CD8-positive, alpha-beta memory T cell (primary cell): ENCODE measurements at regions of chr1 and their contacts with region 1.

Region 1: DNA sequence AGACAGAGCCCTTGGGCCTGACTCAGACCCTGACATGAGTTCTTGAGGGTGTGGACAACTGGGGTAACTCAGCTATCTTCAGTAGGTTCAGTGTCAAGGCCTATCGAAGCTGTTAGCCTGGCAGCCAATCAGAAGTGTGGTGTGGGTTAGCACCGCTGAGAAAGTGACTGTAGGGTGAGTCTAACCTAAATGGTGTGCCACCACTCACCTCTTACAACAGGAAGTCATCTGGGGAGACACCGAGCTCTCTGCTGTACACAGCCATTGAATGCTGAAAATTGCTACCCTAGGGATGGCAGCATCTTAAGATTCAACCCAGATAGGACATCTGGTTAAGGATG is 44.6 kb downstream of the RASSF5 start:
- DNase-seq: peak; percentile 71 to 91 (median 83)
- H3K4me3 ChIP-seq: no peak overlapping the region
- H3K4me3 Mint-ChIP-seq: peak overlapping the region; percentile 4 to 79 (median 60)
- H3K27ac ChIP-seq: no peak overlapping the region
- H3K27ac Mint-ChIP-seq: peak overlapping the region; percentile 84 to 100 (median 96)
- H3K4me1 ChIP-seq: peaks cover 65% of the 10 kb centered on the region
- H3K4me1 Mint-ChIP-seq: peaks cover 57 to 64% (median 61%) of the 10 kb centered on the region in 3 donors
- H3K27me3 ChIP-seq: no peaks in the 10 kb centered on the region
- H3K27me3 Mint-ChIP-seq: peaks cover 0 to 4% of the 10 kb centered on the region in 2 donors

Region 2: DNA sequence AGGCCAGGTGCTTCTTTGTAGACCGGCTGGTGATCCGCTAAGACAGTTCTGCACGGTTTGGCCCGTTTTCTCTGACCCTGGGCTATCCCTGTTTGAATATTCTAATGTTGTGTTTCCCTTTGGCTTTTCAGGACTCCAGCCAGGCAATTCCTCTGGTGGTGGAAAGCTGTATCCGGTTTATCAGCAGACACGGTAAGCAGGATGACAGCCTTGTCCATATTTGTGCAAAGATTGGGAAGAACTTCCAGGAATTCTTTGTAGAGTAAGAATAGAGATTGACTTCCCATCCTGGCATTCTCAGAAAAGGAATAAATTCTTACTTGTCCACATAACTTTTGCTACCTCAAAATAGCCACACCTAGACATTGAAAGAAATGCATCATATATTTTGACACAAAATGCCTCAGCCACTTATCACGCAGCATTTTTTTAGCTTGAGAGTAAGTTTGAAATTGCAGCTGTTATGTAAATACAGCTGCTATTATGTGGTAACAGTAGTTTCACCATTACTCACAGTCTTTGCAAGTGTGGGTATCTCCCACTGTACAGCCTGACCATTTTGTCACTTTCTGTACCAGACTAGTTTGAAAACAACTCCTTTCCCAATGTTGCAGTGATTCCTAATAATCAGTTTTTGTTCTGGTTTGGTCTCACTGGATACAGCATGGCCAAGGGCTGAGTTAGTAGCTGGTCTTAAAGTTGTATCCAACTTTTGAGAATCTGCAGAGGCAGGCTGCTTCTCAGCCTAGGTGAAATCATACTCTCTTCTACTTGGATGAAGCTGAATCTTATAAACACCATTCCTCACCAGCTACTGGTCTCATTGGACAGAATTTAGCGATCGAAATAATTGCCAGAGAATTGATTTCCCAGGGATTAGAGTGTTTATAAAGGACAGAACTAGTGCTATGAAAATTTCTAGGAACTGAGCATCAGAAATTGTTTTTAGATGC is 121.6 kb before region 1 on chr1:
- CTCF ChIA-PET with region 1: no interaction called
- POLR2A ChIA-PET with region 1: no interaction called
- DNase-seq: no peak
- H3K4me3 ChIP-seq: no peak overlapping the region
- H3K4me3 Mint-ChIP-seq: no peak overlapping the region
- H3K27ac ChIP-seq: no peak overlapping the region
- H3K27ac Mint-ChIP-seq: no peak overlapping the region
- H3K4me1 ChIP-seq: no peaks in the 10 kb centered on the region
- H3K4me1 Mint-ChIP-seq: no peaks in the 10 kb centered on the region
- H3K27me3 ChIP-seq: no peaks in the 10 kb centered on the region
- H3K27me3 Mint-ChIP-seq: no peaks in the 10 kb centered on the region

Region 3: DNA sequence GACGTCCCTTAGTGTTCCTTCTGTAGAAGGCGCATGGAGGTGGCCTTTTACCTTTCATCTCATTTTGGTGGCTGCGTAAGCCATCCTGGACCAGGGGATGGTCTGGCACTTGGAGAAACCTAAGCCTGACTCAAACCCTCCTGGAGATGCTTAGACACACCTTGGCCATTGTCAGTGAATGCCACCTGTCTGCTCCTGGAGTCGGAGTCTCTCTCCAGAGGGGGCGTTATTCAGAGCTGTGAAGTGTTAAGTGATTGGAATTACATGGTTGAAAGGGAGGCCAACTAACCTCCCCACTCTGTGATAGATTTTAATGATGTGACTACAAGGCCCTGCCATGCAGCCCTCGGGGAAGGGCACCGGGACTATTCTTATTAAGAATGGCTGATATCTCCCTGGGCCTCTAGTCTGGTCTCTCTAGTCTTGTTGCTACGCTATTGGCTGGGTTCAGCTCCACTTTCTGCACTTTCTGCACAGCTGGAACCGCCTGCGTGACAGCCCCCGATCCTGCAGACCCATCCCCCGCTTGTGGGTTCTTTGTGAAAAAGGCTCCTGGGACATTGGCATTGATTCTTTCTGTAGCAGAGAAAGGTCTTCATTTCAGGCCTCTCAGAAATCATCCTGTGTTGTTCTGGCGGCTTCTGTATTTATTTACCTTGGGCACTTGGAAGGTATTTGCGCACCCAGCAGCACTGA is 40.4 kb before region 1 on chr1:
- CTCF ChIA-PET with region 1: no interaction called
- POLR2A ChIA-PET with region 1: no interaction called
- DNase-seq: no peak
- H3K4me3 ChIP-seq: no peak overlapping the region
- H3K4me3 Mint-ChIP-seq: peak overlapping the region in 1 of 7 donors; percentile 68
- H3K27ac ChIP-seq: no peak overlapping the region
- H3K27ac Mint-ChIP-seq: no peak overlapping the region
- H3K4me1 ChIP-seq: peaks cover 14% of the 10 kb centered on the region
- H3K4me1 Mint-ChIP-seq: peaks cover 9 to 22% (median 15%) of the 10 kb centered on the region in 3 donors
- H3K27me3 ChIP-seq: peaks cover 17% of the 10 kb centered on the region
- H3K27me3 Mint-ChIP-seq: peaks cover 12 to 22% of the 10 kb centered on the region in 2 donors

Region 4: DNA sequence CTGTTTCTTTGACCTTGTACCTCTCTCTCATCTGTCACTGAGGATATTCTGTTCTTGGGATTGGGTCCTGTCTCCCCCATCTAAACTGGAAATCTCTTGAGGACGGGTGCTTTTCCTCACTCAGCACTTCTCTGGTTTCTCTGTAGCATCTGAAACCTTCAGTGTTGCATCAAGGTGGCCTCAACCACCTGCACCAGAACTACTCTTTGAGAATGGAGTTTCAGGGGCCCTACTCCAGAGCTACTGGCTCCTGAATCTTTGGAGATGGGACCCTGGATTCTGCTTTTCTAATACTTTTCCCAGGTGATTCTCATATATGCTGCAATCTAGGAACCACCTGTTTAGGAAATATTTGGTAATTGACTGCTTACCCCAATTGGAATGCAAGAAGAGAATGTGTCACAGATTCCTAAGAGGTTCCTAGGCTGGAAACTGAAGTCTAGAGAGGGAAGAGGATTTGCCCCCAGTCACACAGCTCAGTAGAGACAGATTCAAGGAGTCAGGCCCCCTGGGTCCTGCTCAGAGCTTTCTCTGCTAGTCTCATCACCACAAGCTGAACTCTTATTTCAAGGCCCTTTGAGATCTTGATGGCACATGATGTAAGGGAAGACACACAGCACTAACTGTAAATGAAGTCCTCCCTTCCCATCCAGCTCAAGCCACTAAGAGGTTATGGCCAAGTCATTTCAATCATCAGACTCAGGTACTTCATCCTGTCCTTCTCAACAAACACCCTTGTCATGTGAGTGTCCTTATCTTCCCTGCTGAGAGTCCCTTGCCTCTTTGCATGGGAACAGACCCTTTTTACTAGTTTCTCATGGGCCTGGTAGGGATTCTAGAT is 11.6 kb after region 1 on chr1:
- CTCF ChIA-PET with region 1: interaction called, 122 read pairs
- POLR2A ChIA-PET with region 1: interaction called, 15 read pairs
- DNase-seq: no peak
- H3K4me3 ChIP-seq: peak overlapping the region; percentile 54
- H3K4me3 Mint-ChIP-seq: peak overlapping the region; percentile 63 to 89 (median 81)
- H3K27ac ChIP-seq: no peak overlapping the region
- H3K27ac Mint-ChIP-seq: peak overlapping the region; percentile 84 to 97 (median 95)
- H3K4me1 ChIP-seq: peaks cover 92% of the 10 kb centered on the region
- H3K4me1 Mint-ChIP-seq: peaks cover 89 to 96% (median 95%) of the 10 kb centered on the region in 3 donors
- H3K27me3 ChIP-seq: no peaks in the 10 kb centered on the region
- H3K27me3 Mint-ChIP-seq: peaks cover 0 to 4% of the 10 kb centered on the region in 2 donors

Region 5: DNA sequence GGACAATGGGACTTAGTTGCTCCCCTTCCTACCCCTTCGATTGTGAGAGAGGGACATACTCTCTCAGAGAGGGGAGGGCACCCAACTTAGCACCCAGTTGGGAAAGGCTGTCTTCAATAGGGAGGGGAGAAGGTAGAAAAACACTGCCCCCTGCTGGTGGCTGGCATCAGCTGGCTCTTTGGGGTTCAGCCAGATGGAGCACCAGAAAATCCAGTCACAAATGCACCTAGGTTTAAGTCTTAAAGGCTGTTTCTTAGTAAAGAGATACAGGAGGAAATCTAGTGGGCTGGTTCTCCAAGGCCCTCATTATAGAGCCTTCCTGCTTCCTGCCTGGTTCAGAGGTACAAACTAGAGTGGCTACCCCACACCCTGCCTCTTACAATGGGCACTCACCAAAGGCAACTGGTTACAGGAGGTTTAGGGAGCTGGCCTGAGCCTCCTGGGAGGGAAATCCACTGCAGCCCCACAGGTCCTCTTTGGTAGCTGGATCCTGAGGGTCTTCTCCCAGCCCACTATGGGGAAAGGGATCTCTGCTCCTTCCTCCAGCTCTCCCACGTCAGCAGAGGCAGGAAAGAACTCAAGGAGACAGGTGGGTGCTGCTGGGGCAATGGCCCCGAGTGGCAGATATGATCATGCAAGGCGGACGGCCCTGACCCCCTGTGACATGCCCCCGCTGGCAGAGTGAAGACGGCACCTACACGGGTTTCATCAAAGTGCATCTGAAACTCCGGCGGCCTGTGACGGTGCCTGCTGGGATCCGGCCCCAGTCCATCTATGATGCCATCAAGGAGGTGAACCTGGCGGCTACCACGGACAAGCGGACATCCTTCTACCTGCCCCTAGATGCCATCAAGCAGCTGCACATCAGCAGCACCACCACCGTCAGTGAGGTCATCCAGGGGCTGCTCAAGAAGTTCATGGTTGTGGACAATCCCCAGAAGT is 32.0 kb after region 1 on chr1:
- CTCF ChIA-PET with region 1: interaction called, 503 read pairs
- POLR2A ChIA-PET with region 1: interaction called, 45 read pairs
- DNase-seq: peak; percentile 76 to 86 (median 80)
- H3K4me3 ChIP-seq: peak overlapping the region; percentile 22
- H3K4me3 Mint-ChIP-seq: peak overlapping the region; percentile 59 to 92 (median 88)
- H3K27ac ChIP-seq: peak overlapping the region; percentile 78
- H3K27ac Mint-ChIP-seq: peak overlapping the region; percentile 92 to 100 (median 98)
- H3K4me1 ChIP-seq: peaks cover 51% of the 10 kb centered on the region
- H3K4me1 Mint-ChIP-seq: peaks cover 58 to 84% (median 72%) of the 10 kb centered on the region in 3 donors
- H3K27me3 ChIP-seq: no peaks in the 10 kb centered on the region
- H3K27me3 Mint-ChIP-seq: peaks cover 0 to 1% of the 10 kb centered on the region in 2 donors

Region 6: GRCh38 chr1:206590025-206590758 is 38.2 kb after region 1 on chr1:
- CTCF ChIA-PET with region 1: interaction called, 503 read pairs
- POLR2A ChIA-PET with region 1: interaction called, 45 read pairs
- DNase-seq: peak in 3 of 5 donors; percentile 29 to 64 (median 58)
- H3K4me3 ChIP-seq: no peak overlapping the region
- H3K4me3 Mint-ChIP-seq: peak overlapping the region in 5 of 7 donors; percentile 1 to 65 (median 36)
- H3K27ac ChIP-seq: no peak overlapping the region
- H3K27ac Mint-ChIP-seq: peak overlapping the region; percentile 85 to 96 (median 93)
- H3K4me1 ChIP-seq: peaks cover 13% of the 10 kb centered on the region
- H3K4me1 Mint-ChIP-seq: peaks cover 42 to 66% (median 58%) of the 10 kb centered on the region in 3 donors
- H3K27me3 ChIP-seq: no peaks in the 10 kb centered on the region
- H3K27me3 Mint-ChIP-seq: no peaks in the 10 kb centered on the region

Region 7: GRCh38 chr1:206600527-206600926 is 48.6 kb after region 1 on chr1:
- CTCF ChIA-PET with region 1: interaction called, 11 read pairs
- POLR2A ChIA-PET with region 1: no interaction called
- DNase-seq: no peak
- H3K4me3 ChIP-seq: no peak overlapping the region
- H3K4me3 Mint-ChIP-seq: no peak overlapping the region
- H3K27ac ChIP-seq: no peak overlapping the region
- H3K27ac Mint-ChIP-seq: no peak overlapping the region
- H3K4me1 ChIP-seq: no peaks in the 10 kb centered on the region
- H3K4me1 Mint-ChIP-seq: no peaks in the 10 kb centered on the region
- H3K27me3 ChIP-seq: no peaks in the 10 kb centered on the region
- H3K27me3 Mint-ChIP-seq: no peaks in the 10 kb centered on the region

Region 8: GRCh38 chr1:206808615-206809014 is 256.7 kb after region 1 on chr1:
- CTCF ChIA-PET with region 1: no interaction called
- POLR2A ChIA-PET with region 1: no interaction called
- DNase-seq: peak; percentile 7 to 69 (median 67)
- H3K4me3 ChIP-seq: no peak overlapping the region
- H3K4me3 Mint-ChIP-seq: no peak overlapping the region
- H3K27ac ChIP-seq: no peak overlapping the region
- H3K27ac Mint-ChIP-seq: peak overlapping the region in 7 of 8 donors; percentile 9 to 85 (median 79)
- H3K4me1 ChIP-seq: peaks cover 38% of the 10 kb centered on the region
- H3K4me1 Mint-ChIP-seq: peaks cover 31 to 46% (median 43%) of the 10 kb centered on the region in 3 donors
- H3K27me3 ChIP-seq: no peaks in the 10 kb centered on the region
- H3K27me3 Mint-ChIP-seq: peaks cover 0 to 1% of the 10 kb centered on the region in 2 donors